ENCODE measurements at regions of chr3 and their contacts with region 1.

Region 1: DNA sequence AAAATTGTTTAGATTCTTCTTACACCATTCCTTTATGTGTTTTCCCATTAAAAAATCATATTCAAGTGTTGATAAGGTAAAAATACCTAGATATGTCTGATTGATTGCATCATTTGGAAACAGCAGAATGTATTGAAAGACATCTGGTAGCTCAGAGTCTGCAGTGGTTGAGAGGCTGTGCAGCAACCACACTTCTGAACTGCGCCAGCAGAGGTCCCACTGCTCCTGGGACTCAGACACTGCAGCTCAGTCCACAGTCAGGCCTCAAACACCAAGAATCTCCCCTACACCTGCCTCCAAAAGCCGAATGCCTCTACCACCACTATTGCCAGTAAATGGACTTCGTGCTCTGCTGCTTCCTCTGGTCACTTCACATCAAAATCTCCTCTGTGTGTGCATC is 176.9 kb upstream of the LMCD1 start:
- DNase-seq: peak; percentile 22 to 74 (median 60)
- ATAC-seq: peak; percentile 67
- H3K4me3 ChIP-seq: no peak overlapping the region
- H3K4me3 Mint-ChIP-seq: no peak overlapping the region
- H3K27ac ChIP-seq: no peak overlapping the region
- H3K27ac Mint-ChIP-seq: no peak overlapping the region
- H3K4me1 ChIP-seq: peaks cover 7% of the 10 kb centered on the region
- H3K4me1 Mint-ChIP-seq: peaks cover 30% of the 10 kb centered on the region
- H3K27me3 ChIP-seq: no peaks in the 10 kb centered on the region
- H3K27me3 Mint-ChIP-seq: peaks cover 2% of the 10 kb centered on the region
- CTCF ChIP-seq: peak; percentile 67

Region 2: GRCh38 chr3:8301728-8302462 is 22.8 kb before region 1 on chr3:
- CTCF ChIA-PET with region 1: interaction called, 22 read pairs
- POLR2A ChIA-PET with region 1: interaction called, 3 read pairs
- intact Hi-C with region 1: no loop called
- DNase-seq: peak in 2 of 9 experiments; percentile 55 to 61
- ATAC-seq: peak; percentile 34
- H3K4me3 ChIP-seq: no peak overlapping the region
- H3K4me3 Mint-ChIP-seq: no peak overlapping the region
- H3K27ac ChIP-seq: no peak overlapping the region
- H3K27ac Mint-ChIP-seq: no peak overlapping the region
- H3K4me1 ChIP-seq: no peaks in the 10 kb centered on the region
- H3K4me1 Mint-ChIP-seq: peaks cover 6% of the 10 kb centered on the region
- H3K27me3 ChIP-seq: no peaks in the 10 kb centered on the region
- H3K27me3 Mint-ChIP-seq: no peaks in the 10 kb centered on the region
- CTCF ChIP-seq: peak; percentile 66

Region 3: GRCh38 chr3:8366214-8366810 is 41.6 kb after region 1 on chr3:
- CTCF ChIA-PET with region 1: interaction called, 4 read pairs
- POLR2A ChIA-PET with region 1: no interaction called
- intact Hi-C with region 1: loop called in 1 of 2 experiments (anchors 5 kb)
- DNase-seq: no peak
- ATAC-seq: no peak
- H3K4me3 ChIP-seq: no peak overlapping the region
- H3K4me3 Mint-ChIP-seq: no peak overlapping the region
- H3K27ac ChIP-seq: no peak overlapping the region
- H3K27ac Mint-ChIP-seq: no peak overlapping the region
- H3K4me1 ChIP-seq: no peaks in the 10 kb centered on the region
- H3K4me1 Mint-ChIP-seq: peaks cover 9% of the 10 kb centered on the region
- H3K27me3 ChIP-seq: no peaks in the 10 kb centered on the region
- H3K27me3 Mint-ChIP-seq: peaks cover 3% of the 10 kb centered on the region
- CTCF ChIP-seq: no peak

Region 4: DNA sequence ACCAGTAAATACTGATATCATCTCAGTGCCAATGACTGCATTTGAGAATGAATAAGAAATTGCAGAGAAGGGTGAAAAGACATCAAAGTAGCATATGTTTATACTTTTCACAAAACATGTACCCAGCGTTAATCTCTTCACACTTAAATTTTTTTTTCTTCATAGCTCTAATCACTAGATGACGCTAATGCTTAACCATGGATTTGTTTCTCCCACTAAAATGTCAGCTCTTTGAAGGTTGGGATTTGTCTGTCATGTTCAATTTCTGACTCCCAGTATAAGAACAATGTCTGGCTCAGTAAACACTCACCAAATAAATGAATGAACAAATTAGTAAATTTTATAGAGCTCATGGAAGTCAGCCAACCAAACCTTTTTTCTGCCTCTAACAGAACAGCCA is 98.6 kb after region 1 on chr3:
- CTCF ChIA-PET with region 1: interaction called, 222 read pairs
- POLR2A ChIA-PET with region 1: no interaction called
- intact Hi-C with region 1: no loop called
- DNase-seq: no peak
- ATAC-seq: no peak
- H3K4me3 ChIP-seq: no peak overlapping the region
- H3K4me3 Mint-ChIP-seq: no peak overlapping the region
- H3K27ac ChIP-seq: no peak overlapping the region
- H3K27ac Mint-ChIP-seq: no peak overlapping the region
- H3K4me1 ChIP-seq: no peaks in the 10 kb centered on the region
- H3K4me1 Mint-ChIP-seq: no peaks in the 10 kb centered on the region
- H3K27me3 ChIP-seq: no peaks in the 10 kb centered on the region
- H3K27me3 Mint-ChIP-seq: peaks cover 1% of the 10 kb centered on the region
- CTCF ChIP-seq: no peak

Region 5: GRCh38 chr3:8622873-8623691 is 298.3 kb after region 1 on chr3:
- CTCF ChIA-PET with region 1: no interaction called
- POLR2A ChIA-PET with region 1: no interaction called
- intact Hi-C with region 1: loop called in 1 of 2 experiments (anchors 5 kb)
- DNase-seq: peak in 6 of 9 experiments; percentile 9 to 44 (median 16)
- ATAC-seq: no peak
- H3K4me3 ChIP-seq: no peak overlapping the region
- H3K4me3 Mint-ChIP-seq: peak overlapping the region; percentile 9
- H3K27ac ChIP-seq: no peak overlapping the region
- H3K27ac Mint-ChIP-seq: no peak overlapping the region
- H3K4me1 ChIP-seq: no peaks in the 10 kb centered on the region
- H3K4me1 Mint-ChIP-seq: no peaks in the 10 kb centered on the region
- H3K27me3 ChIP-seq: no peaks in the 10 kb centered on the region
- H3K27me3 Mint-ChIP-seq: peaks cover 4% of the 10 kb centered on the region
- CTCF ChIP-seq: no peak

Region 6: GRCh38 chr3:9779721-9780457 is 1455.1 kb after region 1 on chr3:
- CTCF ChIA-PET with region 1: no interaction called
- POLR2A ChIA-PET with region 1: no interaction called
- intact Hi-C with region 1: no loop called
- DNase-seq: peak in 8 of 9 experiments; percentile 6 to 67 (median 25)
- ATAC-seq: peak; percentile 69
- H3K4me3 ChIP-seq: no peak overlapping the region
- H3K4me3 Mint-ChIP-seq: peak overlapping the region; percentile 35
- H3K27ac ChIP-seq: peak overlapping the region in 1 of 2 experiments; percentile 71
- H3K27ac Mint-ChIP-seq: peak overlapping the region; percentile 84
- H3K4me1 ChIP-seq: peaks cover 43% of the 10 kb centered on the region
- H3K4me1 Mint-ChIP-seq: peaks cover 50% of the 10 kb centered on the region
- H3K27me3 ChIP-seq: no peaks in the 10 kb centered on the region
- H3K27me3 Mint-ChIP-seq: no peaks in the 10 kb centered on the region
- CTCF ChIP-seq: no peak